A549 (cell line): ENCODE measurements at regions of chr16 and their contacts with region 1.

Region 1: DNA sequence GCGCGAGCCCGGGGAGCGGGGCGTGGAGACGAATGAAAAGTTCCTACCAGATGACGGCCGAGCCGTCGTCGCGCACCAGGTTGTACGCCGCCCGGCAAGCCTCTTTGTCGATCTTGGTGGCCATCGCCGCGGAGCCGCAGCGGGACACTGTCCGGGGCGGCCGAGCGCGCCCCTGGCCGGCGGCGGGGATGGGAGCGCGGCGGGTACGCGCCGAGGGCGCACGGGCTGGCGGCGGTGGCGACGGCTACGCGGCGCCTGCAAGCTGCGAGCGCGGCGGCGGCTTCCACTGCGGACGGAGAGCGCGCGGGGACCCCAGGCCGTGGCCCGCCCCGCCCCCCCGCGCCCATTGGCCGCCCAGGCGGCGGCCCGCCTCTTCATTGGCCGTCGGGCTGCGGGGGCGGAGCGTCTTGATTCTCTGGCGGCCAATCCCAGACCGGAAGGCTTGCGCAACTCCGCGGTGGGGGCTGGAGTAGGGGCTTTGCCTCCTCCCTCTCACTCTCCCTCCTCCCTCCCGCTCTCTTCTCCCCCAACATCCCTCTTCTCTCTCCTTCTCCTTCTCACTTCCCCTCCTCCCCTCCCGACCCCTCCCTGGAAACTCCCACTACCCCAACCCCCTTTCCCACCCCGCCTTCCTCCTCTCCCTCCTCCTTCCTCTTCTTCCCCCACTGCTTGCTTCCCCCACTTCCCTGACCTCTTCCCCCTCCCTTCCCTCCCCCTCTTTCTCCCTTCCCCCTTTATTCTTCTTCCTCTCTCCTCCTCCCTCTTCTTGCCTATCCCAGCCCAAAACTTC is at the start of gene COTL1:
- DNase-seq: peak; percentile 88 to 98
- ATAC-seq: peak; percentile 63 to 69
- H3K4me3 ChIP-seq: peak within 1 kb of the TSS; percentile 92
- H3K27ac ChIP-seq: peak within 1 kb of the TSS; percentile 82 to 98
- H3K4me1 ChIP-seq: peaks cover 49% of the 10 kb centered on the region
- CTCF ChIP-seq: no peak
- EP300 ChIP-seq: no peak
- POLR2A ChIP-seq: peak; percentile 99
- RAD21 ChIP-seq: no peak
- polyA plus RNA-seq, gene COTL1: 89.7 and 94.1 TPM in 2 replicates

Region 2: GRCh38 chr16:83233153-83233552 is 1384.8 kb before region 1 on chr16:
- CTCF ChIA-PET with region 1: no interaction called
- POLR2A ChIA-PET with region 1: no interaction called
- DNase-seq: no peak
- ATAC-seq: no peak
- H3K4me3 ChIP-seq: no peak overlapping the region
- H3K27ac ChIP-seq: no peak overlapping the region
- H3K4me1 ChIP-seq: no peaks in the 10 kb centered on the region
- CTCF ChIP-seq: no peak
- EP300 ChIP-seq: no peak
- POLR2A ChIP-seq: no peak
- RAD21 ChIP-seq: no peak

Region 3: DNA sequence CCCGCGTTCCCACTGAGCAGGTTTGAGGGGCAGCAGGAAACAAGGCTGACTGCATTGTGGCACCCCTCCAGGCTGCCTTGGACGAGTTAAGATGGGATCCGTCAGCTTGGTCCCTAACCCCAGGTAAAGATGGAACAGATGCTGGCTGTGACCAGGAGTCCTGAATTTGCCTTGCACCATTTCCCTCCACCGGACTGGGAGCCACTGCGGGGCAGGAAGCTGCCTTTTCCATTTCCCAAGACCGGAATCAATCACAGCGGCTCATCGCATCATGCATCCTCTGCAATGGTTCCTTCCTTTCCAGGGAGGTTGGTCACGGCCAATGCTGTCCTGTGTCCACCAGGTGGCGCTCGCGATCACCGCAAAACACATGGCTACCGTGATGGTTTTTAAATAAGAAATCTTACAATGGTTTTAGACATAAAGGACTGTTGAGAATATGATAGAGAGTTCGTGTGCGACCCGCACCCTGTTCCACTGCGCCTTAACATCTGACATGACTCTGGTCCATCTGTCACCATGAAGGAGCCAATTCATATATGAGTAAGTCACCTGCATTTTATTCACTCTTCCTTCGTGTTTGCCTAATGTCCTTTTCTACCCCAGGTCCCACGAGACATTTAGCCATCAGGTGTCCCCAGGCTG is 106.7 kb before region 1 on chr16:
- CTCF ChIA-PET with region 1: interaction called, 284 read pairs
- POLR2A ChIA-PET with region 1: interaction called, 19 read pairs
- DNase-seq: peak; percentile 76 to 85
- ATAC-seq: peak; percentile 88 to 90
- H3K4me3 ChIP-seq: peak overlapping the region; percentile 14; the same call in 1 of the 3 replicates
- H3K27ac ChIP-seq: peak overlapping the region; percentile 36 to 77
- H3K4me1 ChIP-seq: peaks cover 7% of the 10 kb centered on the region
- CTCF ChIP-seq: peak; percentile 87
- EP300 ChIP-seq: no peak
- POLR2A ChIP-seq: no peak
- RAD21 ChIP-seq: peak; percentile 87 to 95

Region 4: DNA sequence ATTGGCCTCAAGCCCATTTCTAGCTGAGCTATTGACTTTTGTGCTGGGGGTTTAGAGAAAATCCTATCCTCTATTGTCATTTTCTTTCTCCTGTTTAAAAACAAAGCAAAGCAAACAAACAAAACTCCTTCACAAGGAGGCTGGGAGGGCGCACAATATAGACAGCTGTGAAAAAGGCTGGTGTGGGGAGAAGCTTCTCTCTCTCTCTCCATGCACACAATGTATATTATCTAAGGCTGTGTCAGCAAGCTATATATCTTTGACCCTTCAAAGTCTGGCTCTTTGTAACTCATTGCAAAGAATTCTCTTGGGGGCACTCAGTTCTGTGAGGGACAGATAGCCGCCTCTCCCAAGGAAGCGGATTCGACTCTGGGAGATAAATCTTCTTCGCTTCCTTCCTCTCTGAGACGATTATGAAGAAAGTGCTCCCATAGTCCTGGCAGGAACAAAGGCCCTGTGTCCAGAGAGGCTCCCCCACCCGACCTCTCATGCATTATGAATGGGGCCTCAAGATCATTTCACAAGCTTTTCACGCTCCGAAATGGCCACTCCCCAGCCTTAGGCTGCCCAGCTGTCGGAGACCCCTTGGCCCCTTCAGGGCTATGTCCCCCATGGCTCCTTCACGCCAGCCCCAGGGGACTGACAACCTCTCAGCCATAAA is 80.4 kb before region 1 on chr16:
- CTCF ChIA-PET with region 1: interaction called, 11 read pairs
- POLR2A ChIA-PET with region 1: no interaction called
- DNase-seq: no peak
- ATAC-seq: no peak
- H3K4me3 ChIP-seq: no peak overlapping the region
- H3K27ac ChIP-seq: no peak overlapping the region
- H3K4me1 ChIP-seq: peaks cover 10% of the 10 kb centered on the region
- CTCF ChIP-seq: no peak
- EP300 ChIP-seq: no peak
- POLR2A ChIP-seq: no peak
- RAD21 ChIP-seq: no peak

Region 5: GRCh38 chr16:84599521-84600202 is 18.3 kb before region 1 on chr16:
- CTCF ChIA-PET with region 1: interaction called, 17 read pairs
- POLR2A ChIA-PET with region 1: interaction called, 10 read pairs
- DNase-seq: peak in 1 of 2 experiments; percentile 46
- ATAC-seq: peak in 1 of 2 experiments; percentile 26; a peak in 3 of 6 replicates
- H3K4me3 ChIP-seq: no peak overlapping the region
- H3K27ac ChIP-seq: peak overlapping the region; percentile 84 to 95
- H3K4me1 ChIP-seq: peaks cover 68% of the 10 kb centered on the region
- CTCF ChIP-seq: no peak
- EP300 ChIP-seq: no peak
- POLR2A ChIP-seq: no peak
- RAD21 ChIP-seq: no peak

Region 6: DNA sequence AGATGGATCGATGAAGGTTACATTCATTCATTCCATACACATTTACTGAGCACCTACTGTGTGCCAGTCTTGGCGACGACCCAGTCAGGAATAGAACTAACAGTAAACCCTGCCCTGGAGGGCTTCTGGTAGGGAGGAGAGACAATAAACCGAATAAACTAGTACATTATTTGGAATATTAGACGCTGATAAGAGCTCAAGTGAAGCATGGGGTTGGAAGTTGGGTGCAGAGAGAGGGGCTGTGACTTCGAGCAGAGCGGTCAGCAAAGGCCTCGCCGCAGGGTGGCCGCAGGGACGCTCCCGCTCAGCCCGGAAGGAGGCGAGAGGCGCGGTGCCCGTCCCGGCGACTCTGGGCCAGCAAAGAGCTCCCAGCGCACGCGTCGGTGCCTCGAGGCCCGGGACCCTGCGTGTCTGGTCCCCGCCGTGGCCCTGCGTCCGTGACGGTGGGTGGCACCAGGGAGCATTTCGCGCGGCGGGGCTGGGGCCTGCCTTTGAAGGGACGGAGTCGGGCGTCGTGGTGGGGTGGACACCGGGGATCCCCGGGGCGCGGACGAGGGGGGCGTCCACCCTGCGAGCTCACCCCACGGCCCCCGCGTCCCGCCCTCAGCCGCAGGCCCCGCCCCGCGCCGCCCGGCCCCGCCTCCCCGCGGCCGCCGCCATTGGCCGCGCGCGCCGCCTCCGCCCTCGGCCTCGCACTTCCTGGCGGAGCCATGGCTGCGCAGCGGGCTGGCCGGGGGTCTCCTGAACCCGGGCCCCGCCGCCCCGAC is 30.0 kb after region 1 on chr16 and contains the start of gene KLHL36:
- CTCF ChIA-PET with region 1: interaction called, 21 read pairs
- POLR2A ChIA-PET with region 1: no interaction called
- DNase-seq: peak; percentile 46 to 82
- ATAC-seq: peak; percentile 82 to 91
- H3K4me3 ChIP-seq: peak within 1 kb of the TSS; percentile 92
- H3K27ac ChIP-seq: peak within 1 kb of the TSS; percentile 90 to 99
- H3K4me1 ChIP-seq: peaks cover 23% of the 10 kb centered on the region; the same call in 2 of the 3 replicates
- CTCF ChIP-seq: no peak
- EP300 ChIP-seq: no peak
- POLR2A ChIP-seq: no peak; the same call in 1 of the 2 replicates
- RAD21 ChIP-seq: no peak
- polyA plus RNA-seq, gene KLHL36: 21.0 and 22.3 TPM in 2 replicates

Region 7: GRCh38 chr16:84738255-84739038 is 120.5 kb after region 1 on chr16:
- CTCF ChIA-PET with region 1: interaction called, 51 read pairs
- POLR2A ChIA-PET with region 1: no interaction called
- DNase-seq: peak; percentile 84 to 86
- ATAC-seq: peak; percentile 91
- H3K4me3 ChIP-seq: no peak overlapping the region
- H3K27ac ChIP-seq: no peak overlapping the region; a peak in 1 of 6 replicates
- H3K4me1 ChIP-seq: peaks cover 79% of the 10 kb centered on the region
- CTCF ChIP-seq: peak; percentile 95
- EP300 ChIP-seq: no peak
- POLR2A ChIP-seq: no peak
- RAD21 ChIP-seq: peak; percentile 69 to 70